ENCODE measurements at regions of chr19 and their contacts with region 1.

Region 1: GRCh38 chr19:48321622-48322591 is 3.4 kb upstream of the EMP3 start:
- DNase-seq: peak; percentile 99 to 100 (median 100)
- ATAC-seq: peak; percentile 87
- H3K4me3 ChIP-seq: peak overlapping the region; percentile 79
- H3K4me3 Mint-ChIP-seq: peak overlapping the region; percentile 90 to 99 (median 96)
- H3K27ac ChIP-seq: peak overlapping the region; percentile 100
- H3K27ac Mint-ChIP-seq: peak overlapping the region; percentile 96 to 100 (median 99)
- H3K4me1 ChIP-seq: peaks cover 45 to 47% of the 10 kb centered on the region in 2 donors
- H3K4me1 Mint-ChIP-seq: peaks cover 36 to 63% (median 51%) of the 10 kb centered on the region in 7 donors
- H3K27me3 ChIP-seq: no peaks in the 10 kb centered on the region
- H3K27me3 Mint-ChIP-seq: peaks cover 0 to 2% (median 0%) of the 10 kb centered on the region in 5 donors

Region 2: GRCh38 chr19:48203732-48204628 is 117.9 kb before region 1 on chr19:
- CTCF ChIA-PET with region 1: no interaction called
- POLR2A ChIA-PET with region 1: interaction called, 3 read pairs
- intact Hi-C with region 1: loop called in 1 of 2 experiments (anchors 5 kb)
- DNase-seq: peak; percentile 73 to 90 (median 89)
- ATAC-seq: peak; percentile 100
- H3K4me3 ChIP-seq: peak overlapping the region; percentile 73
- H3K4me3 Mint-ChIP-seq: no peak overlapping the region
- H3K27ac ChIP-seq: peak overlapping the region; percentile 81
- H3K27ac Mint-ChIP-seq: no peak overlapping the region
- H3K4me1 ChIP-seq: peaks cover 8 to 19% of the 10 kb centered on the region in 2 donors
- H3K4me1 Mint-ChIP-seq: peaks cover 4 to 34% (median 18%) of the 10 kb centered on the region in 7 donors
- H3K27me3 ChIP-seq: no peaks in the 10 kb centered on the region
- H3K27me3 Mint-ChIP-seq: no peaks in the 10 kb centered on the region

Region 3: DNA sequence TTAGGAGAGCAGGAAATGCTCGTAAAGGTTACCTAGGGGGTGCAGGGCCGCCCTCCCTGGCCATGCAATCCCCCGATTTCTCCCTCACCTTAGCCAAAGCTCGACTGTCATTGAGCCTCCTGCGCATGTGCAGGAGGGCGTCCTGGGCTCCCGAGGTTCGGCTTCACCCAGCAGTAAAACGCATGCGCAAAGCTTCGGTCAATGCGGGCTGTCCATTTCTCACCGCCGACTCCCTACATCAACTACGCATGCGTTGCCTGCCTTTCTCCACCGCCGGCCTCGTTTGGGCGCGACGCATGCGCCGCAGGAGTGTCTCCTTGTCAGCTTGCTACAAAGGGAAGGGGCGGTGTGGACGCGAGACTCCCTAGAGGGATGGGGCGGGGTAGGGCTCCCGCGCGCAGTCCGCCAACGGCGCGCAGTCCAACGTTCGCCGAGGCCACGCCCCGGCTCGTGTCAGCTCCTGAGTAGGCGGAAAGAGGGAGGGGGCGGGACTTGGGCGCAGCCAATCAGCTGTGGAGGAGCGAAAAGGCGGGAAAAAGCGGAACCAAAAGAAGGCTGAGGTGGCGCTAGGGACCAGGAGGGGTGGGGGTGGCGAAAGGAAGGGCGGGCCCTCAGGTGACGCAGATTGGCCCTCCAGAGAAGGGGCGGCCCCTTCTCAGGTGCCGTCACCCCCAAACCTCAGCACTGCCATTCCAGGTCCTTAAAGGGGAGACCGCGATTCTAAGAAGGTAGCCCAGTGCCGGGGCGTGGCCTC is 42.1 kb after region 1 on chr19 and contains the starts of genes SYNGR4 and TMEM143:
- CTCF ChIA-PET with region 1: interaction called, 3 read pairs
- POLR2A ChIA-PET with region 1: interaction called, 16 read pairs
- intact Hi-C with region 1: loop called (anchors 1 kb)
- DNase-seq: peak; percentile 91 to 100 (median 99)
- ATAC-seq: peak; percentile 96
- H3K4me3 ChIP-seq: peak within 1 kb of the TSS; percentile 87
- H3K4me3 Mint-ChIP-seq: peak within 1 kb of the TSS; percentile 80 to 97 (median 92)
- H3K27ac ChIP-seq: peak within 1 kb of the TSS; percentile 86
- H3K27ac Mint-ChIP-seq: peak within 1 kb of the TSS; percentile 89 to 98 (median 95)
- H3K4me1 ChIP-seq: peaks cover 9 to 13% of the 10 kb centered on the region in 2 donors
- H3K4me1 Mint-ChIP-seq: peaks cover 0 to 28% (median 6%) of the 10 kb centered on the region in 7 donors
- H3K27me3 ChIP-seq: no peaks in the 10 kb centered on the region
- H3K27me3 Mint-ChIP-seq: peaks cover 0 to 3% (median 0%) of the 10 kb centered on the region in 5 donors
- total RNA-seq, gene SYNGR4: not detected
- total RNA-seq, gene TMEM143: 11.6 to 39.8 (median 20.1) TPM

Region 4: DNA sequence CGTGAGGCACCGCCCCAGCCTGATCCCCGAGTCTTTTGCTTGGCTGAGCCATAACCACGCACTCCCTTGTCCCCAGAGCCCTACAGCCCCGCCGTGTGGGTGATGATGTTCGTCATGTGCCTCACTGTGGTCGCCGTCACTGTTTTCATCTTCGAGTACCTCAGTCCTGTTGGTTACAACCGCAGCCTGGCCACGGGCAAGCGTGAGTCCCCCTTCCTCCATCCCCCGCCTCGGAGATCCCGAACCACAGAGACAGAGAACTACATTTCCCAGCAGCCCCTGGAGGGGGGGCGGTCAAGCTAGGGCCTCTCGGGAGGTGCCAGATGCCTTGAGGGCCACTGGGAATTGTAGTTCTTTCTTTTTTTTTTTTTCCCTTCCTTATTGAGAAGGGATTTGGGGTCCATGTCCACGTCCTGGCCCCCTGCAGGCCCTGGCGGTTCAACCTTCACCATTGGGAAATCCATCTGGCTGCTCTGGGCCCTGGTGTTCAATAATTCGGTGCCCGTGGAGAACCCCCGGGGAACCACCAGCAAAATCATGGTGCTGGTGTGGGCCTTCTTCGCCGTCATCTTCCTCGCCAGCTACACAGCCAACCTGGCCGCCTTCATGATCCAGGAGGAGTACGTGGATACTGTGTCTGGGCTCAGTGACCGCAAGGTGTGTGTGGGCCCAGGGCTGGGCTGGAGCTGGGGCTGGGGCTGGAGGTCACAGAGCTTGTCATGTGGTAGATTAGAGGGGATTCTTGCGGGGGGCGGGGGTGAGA is 97.4 kb after region 1 on chr19:
- CTCF ChIA-PET with region 1: no interaction called
- POLR2A ChIA-PET with region 1: no interaction called
- intact Hi-C with region 1: no loop called
- DNase-seq: peak; percentile 44 to 77 (median 64)
- ATAC-seq: peak; percentile 79
- H3K4me3 ChIP-seq: peak overlapping the region; percentile 15
- H3K4me3 Mint-ChIP-seq: peak overlapping the region; percentile 60 to 90 (median 80)
- H3K27ac ChIP-seq: no peak overlapping the region
- H3K27ac Mint-ChIP-seq: peak overlapping the region in 6 of 9 donors; percentile 6 to 93 (median 74)
- H3K4me1 ChIP-seq: peaks cover 0 to 5% of the 10 kb centered on the region in 2 donors
- H3K4me1 Mint-ChIP-seq: peaks cover 12 to 30% (median 22%) of the 10 kb centered on the region in 7 donors
- H3K27me3 ChIP-seq: no peaks in the 10 kb centered on the region
- H3K27me3 Mint-ChIP-seq: peaks cover 0 to 22% (median 5%) of the 10 kb centered on the region in 5 donors

Region 5: GRCh38 chr19:48468775-48469288 is 146.9 kb after region 1 on chr19:
- CTCF ChIA-PET with region 1: interaction called, 3 read pairs
- POLR2A ChIA-PET with region 1: no interaction called
- intact Hi-C with region 1: loop called (anchors 1 to 5 kb)
- DNase-seq: peak; percentile 93 to 100 (median 100)
- ATAC-seq: peak; percentile 93
- H3K4me3 ChIP-seq: peak overlapping the region; percentile 93
- H3K4me3 Mint-ChIP-seq: peak overlapping the region; percentile 81 to 96 (median 92)
- H3K27ac ChIP-seq: peak overlapping the region; percentile 86
- H3K27ac Mint-ChIP-seq: peak overlapping the region; percentile 85 to 96 (median 90)
- H3K4me1 ChIP-seq: peaks cover 7 to 15% of the 10 kb centered on the region in 2 donors
- H3K4me1 Mint-ChIP-seq: peaks cover 0 to 30% (median 18%) of the 10 kb centered on the region in 7 donors
- H3K27me3 ChIP-seq: no peaks in the 10 kb centered on the region
- H3K27me3 Mint-ChIP-seq: no peaks in the 10 kb centered on the region

Region 6: DNA sequence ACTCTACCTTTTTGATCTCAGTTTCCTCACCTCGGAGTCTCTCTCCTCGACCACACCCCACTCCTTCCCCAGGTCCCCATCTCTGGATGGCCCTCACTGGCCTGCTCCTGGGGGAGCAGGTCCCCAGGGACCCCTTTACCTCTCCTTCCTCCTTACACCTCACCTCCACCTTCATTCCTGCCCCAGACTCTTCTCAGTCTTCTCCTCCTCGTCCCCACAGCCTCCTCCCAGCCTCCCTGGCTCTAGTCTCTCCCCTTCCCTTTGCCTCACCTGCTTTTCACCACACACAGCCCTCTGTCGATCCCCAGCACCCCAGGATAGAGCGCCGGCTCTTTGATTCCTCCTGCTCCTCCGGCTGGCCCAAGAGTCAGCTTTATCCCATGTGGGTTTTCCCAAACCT is 181.4 kb after region 1 on chr19:
- CTCF ChIA-PET with region 1: no interaction called
- POLR2A ChIA-PET with region 1: no interaction called
- intact Hi-C with region 1: no loop called
- DNase-seq: no peak
- ATAC-seq: no peak
- H3K4me3 ChIP-seq: no peak overlapping the region
- H3K4me3 Mint-ChIP-seq: peak overlapping the region in 6 of 10 donors; percentile 6 to 81 (median 52)
- H3K27ac ChIP-seq: no peak overlapping the region
- H3K27ac Mint-ChIP-seq: peak overlapping the region in 6 of 9 donors; percentile 47 to 75 (median 65)
- H3K4me1 ChIP-seq: peaks cover 0 to 15% of the 10 kb centered on the region in 2 donors
- H3K4me1 Mint-ChIP-seq: peaks cover 0 to 26% (median 19%) of the 10 kb centered on the region in 7 donors
- H3K27me3 ChIP-seq: no peaks in the 10 kb centered on the region
- H3K27me3 Mint-ChIP-seq: peaks cover 0 to 2% (median 0%) of the 10 kb centered on the region in 5 donors

Region 7: GRCh38 chr19:48608798-48609263 is 286.9 kb after region 1 on chr19:
- CTCF ChIA-PET with region 1: interaction called, 3 read pairs
- POLR2A ChIA-PET with region 1: no interaction called
- intact Hi-C with region 1: loop called in 1 of 2 experiments (anchors 2 kb)
- DNase-seq: peak in 7 of 9 donors; percentile 32 to 61 (median 55)
- ATAC-seq: peak; percentile 92
- H3K4me3 ChIP-seq: no peak overlapping the region
- H3K4me3 Mint-ChIP-seq: peak overlapping the region in 6 of 10 donors; percentile 16 to 61 (median 40)
- H3K27ac ChIP-seq: no peak overlapping the region
- H3K27ac Mint-ChIP-seq: peak overlapping the region in 4 of 9 donors; percentile 32 to 56 (median 46)
- H3K4me1 ChIP-seq: peaks cover 3 to 4% of the 10 kb centered on the region in 2 donors
- H3K4me1 Mint-ChIP-seq: peaks cover 2 to 6% (median 5%) of the 10 kb centered on the region in 7 donors
- H3K27me3 ChIP-seq: no peaks in the 10 kb centered on the region
- H3K27me3 Mint-ChIP-seq: no peaks in the 10 kb centered on the region

Region 8: GRCh38 chr19:49581007-49581508 is 1259.2 kb after region 1 on chr19 and contains the start of gene PRRG2:
- CTCF ChIA-PET with region 1: no interaction called
- POLR2A ChIA-PET with region 1: no interaction called
- intact Hi-C with region 1: no loop called
- DNase-seq: no peak
- ATAC-seq: no peak
- H3K4me3 ChIP-seq: peak within 1 kb of the TSS; percentile 68
- H3K4me3 Mint-ChIP-seq: peak within 1 kb of the TSS; percentile 91 to 98 (median 94)
- H3K27ac ChIP-seq: peak within 1 kb of the TSS; percentile 84
- H3K27ac Mint-ChIP-seq: peak within 1 kb of the TSS; percentile 85 to 98 (median 92)
- H3K4me1 ChIP-seq: peaks cover 0 to 22% of the 10 kb centered on the region in 2 donors
- H3K4me1 Mint-ChIP-seq: peaks cover 20 to 45% (median 36%) of the 10 kb centered on the region in 7 donors
- H3K27me3 ChIP-seq: no peaks in the 10 kb centered on the region
- H3K27me3 Mint-ChIP-seq: no peaks in the 10 kb centered on the region
- total RNA-seq, gene PRRG2: 0.44 to 2.9 (median 0.58) TPM

Region 9: DNA sequence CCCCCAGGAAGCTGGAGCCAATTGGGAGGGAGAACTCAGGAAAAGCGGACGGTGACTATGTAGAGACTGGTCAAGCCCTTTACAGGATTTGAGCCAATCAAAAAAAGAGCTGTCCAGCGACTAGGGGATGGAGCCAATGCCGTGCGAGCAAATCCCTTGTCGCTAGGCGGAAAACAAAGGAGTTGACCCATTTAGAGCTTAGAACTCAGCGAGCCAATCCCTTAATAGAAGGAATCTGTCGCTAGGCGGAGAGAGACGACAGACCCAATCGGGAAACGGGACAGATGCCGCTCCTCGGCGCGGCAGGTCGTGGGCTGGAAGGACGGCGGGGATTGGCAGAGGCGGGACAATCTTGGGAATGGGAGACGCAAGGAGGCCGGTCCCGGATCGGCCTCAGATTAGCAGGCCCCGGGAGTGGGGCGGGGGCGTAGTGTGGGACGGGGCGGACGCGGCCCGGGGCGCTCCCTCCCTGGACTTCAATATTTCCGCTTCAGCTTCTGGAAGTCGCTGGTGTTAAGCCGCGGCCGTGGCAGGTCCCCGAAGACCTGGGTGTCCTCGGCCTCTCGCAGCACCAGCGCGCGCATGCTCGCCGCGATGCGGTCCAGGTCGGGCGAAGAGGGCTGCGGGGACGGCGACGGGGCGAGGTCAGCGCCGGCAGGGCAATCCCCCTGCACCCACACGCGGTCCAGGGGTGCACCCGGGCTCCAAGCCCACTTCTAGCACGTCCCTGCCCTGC is 1547.7 kb after region 1 on chr19:
- CTCF ChIA-PET with region 1: no interaction called
- POLR2A ChIA-PET with region 1: no interaction called
- intact Hi-C with region 1: loop called in 1 of 2 experiments (anchors 5 kb)
- DNase-seq: peak; percentile 83 to 94 (median 87)
- ATAC-seq: peak; percentile 87
- H3K4me3 ChIP-seq: peak overlapping the region; percentile 58
- H3K4me3 Mint-ChIP-seq: peak overlapping the region in 2 of 10 donors; percentile 87
- H3K27ac ChIP-seq: peak overlapping the region; percentile 72
- H3K27ac Mint-ChIP-seq: peak overlapping the region in 5 of 9 donors; percentile 59 to 87 (median 74)
- H3K4me1 ChIP-seq: peaks cover 31 to 38% of the 10 kb centered on the region in 2 donors
- H3K4me1 Mint-ChIP-seq: peaks cover 25 to 51% (median 45%) of the 10 kb centered on the region in 7 donors
- H3K27me3 ChIP-seq: no peaks in the 10 kb centered on the region
- H3K27me3 Mint-ChIP-seq: no peaks in the 10 kb centered on the region

Measured in naive thymus-derived CD4-positive, alpha-beta T cell (primary cell).